ENCODE measurements at regions of chr7 and their contacts with region 1.

Region 1: GRCh38 chr7:104362756-104363155 is 34.4 kb downstream of the LHFPL3 start:
- DNase-seq: no peak
- H3K4me3 ChIP-seq: no peak overlapping the region
- H3K27ac ChIP-seq: no peak overlapping the region
- H3K4me1 ChIP-seq: no peaks in the 10 kb centered on the region
- H3K27me3 ChIP-seq: no peaks in the 10 kb centered on the region
- CTCF ChIP-seq: no peak

Region 2: GRCh38 chr7:104288137-104288536 is 74.6 kb before region 1 on chr7:
- CTCF ChIA-PET with region 1: no interaction called
- dilution Hi-C with region 1: loop called (anchors 5 kb)
- in situ Hi-C with region 1: no loop called
- intact Hi-C with region 1: no loop called
- DNase-seq: no peak
- H3K4me3 ChIP-seq: no peak overlapping the region
- H3K27ac ChIP-seq: no peak overlapping the region
- H3K4me1 ChIP-seq: no peaks in the 10 kb centered on the region
- H3K27me3 ChIP-seq: peaks cover 2% of the 10 kb centered on the region
- CTCF ChIP-seq: no peak

Region 3: DNA sequence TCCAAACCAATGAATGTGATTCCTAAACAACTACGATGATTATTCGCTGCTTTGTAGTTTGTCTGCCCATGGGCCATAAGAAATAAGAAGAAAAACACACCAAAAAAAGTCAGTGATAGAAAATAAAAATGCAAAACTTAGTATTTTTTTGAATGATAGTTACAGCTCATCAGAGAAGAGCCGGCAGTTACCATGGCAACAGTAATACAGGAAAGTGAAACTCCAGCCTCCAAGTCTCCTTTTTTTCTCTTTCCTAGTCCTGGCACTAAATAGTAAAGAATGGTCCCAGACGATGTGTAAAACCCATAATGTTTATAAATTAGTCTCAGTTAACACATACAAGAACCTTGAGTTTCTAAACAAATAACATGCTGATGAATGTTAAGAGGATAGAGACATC is 56.0 kb before region 1 on chr7:
- CTCF ChIA-PET with region 1: no interaction called
- dilution Hi-C with region 1: loop called (anchors 5 kb)
- in situ Hi-C with region 1: no loop called
- intact Hi-C with region 1: no loop called
- DNase-seq: no peak
- H3K4me3 ChIP-seq: no peak overlapping the region
- H3K27ac ChIP-seq: no peak overlapping the region
- H3K4me1 ChIP-seq: no peaks in the 10 kb centered on the region
- H3K27me3 ChIP-seq: no peaks in the 10 kb centered on the region
- CTCF ChIP-seq: no peak

Measured in mammary epithelial cell (primary cell).